HCT116 (cell line): ENCODE measurements at regions of chrX and their contacts with region 1.

Region 1: DNA sequence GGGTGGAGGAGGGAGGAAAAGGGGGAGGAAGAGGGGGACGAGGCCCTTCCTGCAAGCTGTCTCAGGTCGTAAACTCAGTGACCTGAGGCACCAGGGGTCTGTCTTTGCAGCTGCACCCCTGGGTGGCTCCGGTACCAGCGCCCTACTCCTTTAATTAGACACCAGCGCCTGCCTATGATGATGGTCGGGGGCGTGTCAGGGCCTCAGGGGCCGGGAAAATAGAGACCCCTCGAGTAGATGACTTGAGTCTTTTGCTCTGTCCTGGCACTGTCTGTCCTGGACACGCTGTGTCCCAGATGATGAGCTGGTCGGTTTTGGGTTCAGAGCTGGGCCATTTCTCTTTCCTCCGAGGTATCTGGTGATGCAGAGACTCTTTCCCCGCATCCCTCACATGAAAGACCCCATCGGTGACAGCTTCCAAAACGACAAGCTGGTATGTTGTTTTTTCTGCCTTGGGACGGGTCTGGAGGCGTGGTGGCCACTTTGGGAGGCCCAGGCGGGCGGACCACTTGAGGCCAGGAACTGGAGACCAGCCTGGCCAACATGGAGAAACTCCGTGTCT is 11.2 kb downstream of the SLC25A6 start:
- DNase-seq: no peak
- ATAC-seq: 0 out of 2 replicates have a peak, but pooled peaks have one; percentile 0
- H3K4me3 ChIP-seq: no peak overlapping the region
- H3K27ac ChIP-seq: no peak overlapping the region
- H3K4me1 ChIP-seq: peaks cover 3 to 40% of the 10 kb centered on the region in 2 experiments; a peak in 3 of 4 replicates
- H3K27me3 ChIP-seq: no peaks in the 10 kb centered on the region
- CTCF ChIP-seq: no peak
- POLR2A ChIP-seq: no peak
- RAD21 ChIP-seq: no peak

Region 2: DNA sequence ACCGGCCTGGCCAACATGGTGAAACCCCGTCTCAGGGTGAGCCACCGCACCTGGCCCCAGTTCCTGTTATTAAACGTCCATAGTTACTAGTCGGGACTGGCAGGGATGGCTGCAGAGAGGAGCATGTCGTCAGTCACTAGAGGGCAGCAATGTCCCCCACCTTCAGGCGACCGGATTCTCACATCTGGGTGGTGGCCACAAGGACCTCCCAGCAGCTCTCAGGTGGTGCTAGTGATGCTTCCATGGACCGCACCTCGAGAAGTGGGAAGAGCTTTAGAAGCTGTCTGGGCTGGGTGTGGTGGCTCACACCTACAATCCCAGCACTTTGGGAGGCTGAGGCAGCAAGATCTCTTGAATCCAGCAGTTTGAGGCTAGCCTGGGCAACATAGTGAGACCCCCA is 57.4 kb before region 1 on chrX:
- CTCF ChIA-PET with region 1: no interaction called
- POLR2A ChIA-PET with region 1: no interaction called
- RAD21 ChIA-PET with region 1: no interaction called
- intact Hi-C with region 1: loop called (anchors 5 kb)
- DNase-seq: peak; percentile 65
- ATAC-seq: peak; percentile 99
- H3K4me3 ChIP-seq: no peak overlapping the region
- H3K27ac ChIP-seq: no peak overlapping the region
- H3K4me1 ChIP-seq: peaks cover 0 to 8% of the 10 kb centered on the region in 2 experiments; a peak in 2 of 4 replicates
- H3K27me3 ChIP-seq: no peaks in the 10 kb centered on the region
- CTCF ChIP-seq: peak; percentile 16 to 62 (median 59); a peak in 4 of 6 replicates
- POLR2A ChIP-seq: no peak
- RAD21 ChIP-seq: peak; percentile 68

Region 3: DNA sequence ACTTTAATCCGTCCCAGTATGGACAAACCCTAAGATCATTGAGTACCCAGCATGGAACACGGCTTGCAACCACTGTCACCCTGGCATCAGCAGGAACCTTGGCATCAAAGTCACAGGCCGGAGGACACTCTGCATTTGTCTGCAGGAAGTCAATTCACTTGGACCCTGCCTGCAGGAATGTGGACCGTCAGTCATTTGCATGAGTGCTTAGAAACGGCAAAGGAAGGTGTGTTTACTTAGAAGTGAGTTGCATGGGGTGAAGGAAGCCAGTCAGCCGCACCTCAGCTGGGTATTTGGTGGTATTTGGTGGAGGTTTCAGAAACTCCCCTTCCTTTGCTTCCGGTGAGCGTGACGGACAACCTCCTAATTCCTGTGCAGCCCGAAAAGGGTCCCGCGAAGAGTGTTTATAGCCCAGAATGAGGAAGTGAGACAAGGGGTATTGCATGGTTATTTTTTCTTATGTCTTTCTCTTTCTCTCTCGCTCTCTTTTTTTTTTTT is 140.8 kb after region 1 on chrX:
- CTCF ChIA-PET with region 1: no interaction called
- POLR2A ChIA-PET with region 1: no interaction called
- RAD21 ChIA-PET with region 1: no interaction called
- intact Hi-C with region 1: no loop called
- DNase-seq: no peak
- ATAC-seq: no peak
- H3K4me3 ChIP-seq: no peak overlapping the region
- H3K27ac ChIP-seq: no peak overlapping the region
- H3K4me1 ChIP-seq: no peaks in the 10 kb centered on the region
- H3K27me3 ChIP-seq: no peaks in the 10 kb centered on the region
- CTCF ChIP-seq: no peak
- POLR2A ChIP-seq: no peak
- RAD21 ChIP-seq: no peak